Activated CD8-positive, alpha-beta T cell treated with anti-CD3 and anti-CD28 coated beads for 36 hours (primary cell): ENCODE measurements at regions of chr6 and their contacts with region 1.

Region 1: GRCh38 chr6:132798869-132799538 is 567 bp upstream of the SLC18B1 start:
- DNase-seq: peak; percentile 83
- ATAC-seq: peak; percentile 86
- H3K4me3 Mint-ChIP-seq: no peak overlapping the region
- H3K27ac Mint-ChIP-seq: no peak overlapping the region
- H3K4me1 Mint-ChIP-seq: peaks cover 19% of the 10 kb centered on the region
- H3K27me3 Mint-ChIP-seq: no peaks in the 10 kb centered on the region
- CTCF ChIP-seq: peak; percentile 73

Region 2: GRCh38 chr6:132598473-132598872 is 200.5 kb before region 1 on chr6:
- CTCF ChIA-PET with region 1: no interaction called
- POLR2A ChIA-PET with region 1: no interaction called
- intact Hi-C with region 1: no loop called
- DNase-seq: peak; percentile 3
- ATAC-seq: no peak
- H3K4me3 Mint-ChIP-seq: no peak overlapping the region
- H3K27ac Mint-ChIP-seq: no peak overlapping the region
- H3K4me1 Mint-ChIP-seq: no peaks in the 10 kb centered on the region
- H3K27me3 Mint-ChIP-seq: peaks cover 18% of the 10 kb centered on the region
- CTCF ChIP-seq: no peak

Region 3: GRCh38 chr6:132669690-132670291 is 129.2 kb before region 1 on chr6:
- CTCF ChIA-PET with region 1: interaction called, 24 read pairs
- POLR2A ChIA-PET with region 1: no interaction called
- intact Hi-C with region 1: no loop called
- DNase-seq: no peak
- ATAC-seq: peak; percentile 60
- H3K4me3 Mint-ChIP-seq: no peak overlapping the region
- H3K27ac Mint-ChIP-seq: no peak overlapping the region
- H3K4me1 Mint-ChIP-seq: peaks cover 2% of the 10 kb centered on the region
- H3K27me3 Mint-ChIP-seq: peaks cover 6% of the 10 kb centered on the region
- CTCF ChIP-seq: peak; percentile 72

Region 4: DNA sequence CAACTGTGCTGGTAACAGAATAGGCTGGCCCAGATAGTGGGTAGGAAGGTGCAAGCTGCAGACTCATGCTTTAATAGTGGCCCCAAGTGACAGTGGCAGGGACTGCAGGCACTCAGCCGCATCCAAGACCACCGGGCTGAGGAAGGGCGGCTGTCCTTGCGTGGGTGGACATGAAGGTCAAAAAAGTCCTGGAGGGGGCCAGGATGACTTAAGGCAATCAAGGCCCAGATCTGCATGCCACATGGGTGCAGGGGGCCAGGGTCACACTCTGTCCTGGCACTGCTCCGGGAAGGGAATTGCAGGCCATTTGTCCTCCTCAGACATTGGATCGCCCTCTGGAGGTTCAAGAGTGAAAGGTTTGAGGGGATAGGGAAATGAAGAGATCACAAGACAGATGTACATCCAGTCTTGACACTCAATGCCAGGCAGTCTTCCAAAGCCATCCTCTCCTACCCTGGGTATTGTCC is 30.9 kb before region 1 on chr6:
- CTCF ChIA-PET with region 1: interaction called, 18 read pairs
- POLR2A ChIA-PET with region 1: interaction called, 9 read pairs
- intact Hi-C with region 1: no loop called
- DNase-seq: peak; percentile 61
- ATAC-seq: peak; percentile 79
- H3K4me3 Mint-ChIP-seq: no peak overlapping the region
- H3K27ac Mint-ChIP-seq: no peak overlapping the region
- H3K4me1 Mint-ChIP-seq: peaks cover 19% of the 10 kb centered on the region
- H3K27me3 Mint-ChIP-seq: no peaks in the 10 kb centered on the region
- CTCF ChIP-seq: peak; percentile 72

Region 5: DNA sequence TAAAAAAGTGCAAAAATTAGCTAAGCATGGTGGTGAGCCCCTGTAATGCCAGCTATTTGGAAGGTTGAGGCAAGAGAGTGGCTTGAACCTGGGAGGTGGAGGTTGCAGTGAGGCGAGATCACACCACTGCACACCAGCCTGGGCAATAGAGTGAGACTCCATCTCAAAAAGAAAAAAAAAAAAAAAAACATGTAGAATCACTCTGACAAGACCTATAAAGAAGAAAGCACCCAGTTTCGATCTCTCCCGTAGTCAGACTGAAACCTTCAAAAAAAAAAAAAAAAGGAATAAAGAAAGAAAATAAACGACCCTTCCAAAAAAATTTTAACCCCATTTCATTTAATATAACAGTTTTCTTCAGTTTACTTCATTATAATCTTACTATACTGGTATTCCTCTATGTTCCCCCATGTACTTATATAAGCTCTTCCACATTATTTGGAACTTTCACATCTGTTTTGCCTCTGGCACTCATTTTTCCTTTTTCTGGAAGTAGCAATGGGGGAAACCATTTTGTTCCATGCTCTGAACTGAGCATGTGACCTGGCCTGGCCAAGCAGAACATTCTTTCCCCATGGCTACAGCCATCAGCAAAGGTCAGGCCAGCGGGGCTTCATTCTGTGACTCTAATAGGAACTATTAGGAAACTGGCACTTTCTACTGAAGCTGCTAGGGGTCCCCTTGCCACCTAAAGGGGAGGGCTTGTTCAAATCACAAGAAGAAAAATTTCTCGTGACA is 10.2 kb before region 1 on chr6:
- CTCF ChIA-PET with region 1: interaction called, 11 read pairs
- POLR2A ChIA-PET with region 1: interaction called, 3 read pairs
- intact Hi-C with region 1: no loop called
- DNase-seq: no peak
- ATAC-seq: no peak
- H3K4me3 Mint-ChIP-seq: no peak overlapping the region
- H3K27ac Mint-ChIP-seq: no peak overlapping the region
- H3K4me1 Mint-ChIP-seq: peaks cover 13% of the 10 kb centered on the region
- H3K27me3 Mint-ChIP-seq: no peaks in the 10 kb centered on the region
- CTCF ChIP-seq: no peak

Region 6: DNA sequence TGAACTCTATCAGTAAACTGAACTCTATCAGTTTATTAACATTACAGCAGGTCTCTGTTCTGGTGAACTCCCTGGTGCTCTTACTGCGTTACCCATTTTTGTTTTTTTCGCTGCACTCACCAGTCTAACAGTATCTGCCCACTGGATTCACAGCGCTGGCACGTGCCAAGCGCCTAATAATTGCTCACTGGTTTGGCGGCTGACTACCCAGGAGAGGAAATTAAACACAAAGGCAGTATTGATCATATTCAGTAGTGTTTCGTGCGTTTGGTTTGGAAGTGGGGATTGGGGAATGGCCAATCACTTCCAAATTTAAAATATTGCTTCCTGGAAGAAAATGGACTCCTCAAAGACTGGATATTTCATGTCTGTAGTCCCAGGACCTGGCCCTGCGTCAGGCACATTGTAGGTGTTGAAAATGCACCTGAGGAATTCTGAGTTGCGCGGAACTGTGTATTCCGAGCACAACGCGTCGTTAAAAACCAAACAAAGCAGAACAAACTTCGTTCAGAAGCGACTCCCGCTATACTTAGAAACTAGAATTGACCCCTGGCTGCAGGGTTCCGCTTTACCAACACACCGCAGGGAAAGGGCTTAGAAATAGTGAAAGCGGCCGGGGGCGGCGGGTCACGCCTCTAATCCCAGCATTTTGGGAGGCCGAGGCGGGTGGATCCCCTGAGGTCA is 14.3 kb after region 1 on chr6:
- CTCF ChIA-PET with region 1: interaction called, 53 read pairs
- POLR2A ChIA-PET with region 1: interaction called, 52 read pairs
- intact Hi-C with region 1: loop called (anchors 1 kb)
- DNase-seq: peak; percentile 70
- ATAC-seq: peak; percentile 7
- H3K4me3 Mint-ChIP-seq: peak overlapping the region; percentile 98
- H3K27ac Mint-ChIP-seq: peak overlapping the region; percentile 99
- H3K4me1 Mint-ChIP-seq: peaks cover 22% of the 10 kb centered on the region
- H3K27me3 Mint-ChIP-seq: no peaks in the 10 kb centered on the region
- CTCF ChIP-seq: no peak

Region 7: DNA sequence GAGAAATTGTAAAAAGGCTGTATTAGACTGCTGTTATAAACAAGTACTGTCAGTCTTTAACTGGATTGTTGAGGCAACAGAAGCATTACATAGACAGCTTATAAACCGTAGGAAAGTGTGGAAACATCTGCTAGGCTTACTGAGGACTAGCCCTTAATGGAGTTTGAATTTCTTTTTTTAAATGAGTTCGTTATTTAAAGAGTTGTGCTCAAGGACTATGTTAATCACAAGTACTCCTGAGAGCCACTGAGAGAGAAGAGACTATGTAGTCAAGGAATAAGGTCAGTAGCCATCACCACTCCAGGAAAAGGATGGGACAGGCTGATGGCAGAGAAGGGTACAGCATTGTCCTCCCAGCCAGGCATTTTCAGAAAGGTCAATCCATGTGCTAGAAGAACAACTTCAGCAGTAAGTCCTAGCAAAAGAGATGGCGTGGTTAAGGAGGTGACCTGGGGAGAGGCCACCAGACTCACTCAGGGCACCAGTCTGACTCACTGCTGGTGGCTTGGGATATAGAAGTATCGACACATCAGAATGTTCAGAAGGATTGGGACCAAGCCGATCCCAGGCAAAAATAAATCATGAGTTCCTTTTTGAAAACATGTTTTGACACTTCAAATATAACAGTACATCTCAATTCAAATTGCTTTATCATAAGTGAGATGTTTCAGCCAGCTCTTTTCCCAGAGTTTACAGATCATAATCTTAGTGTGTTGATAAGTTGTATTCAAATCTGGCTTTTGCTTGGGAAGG is 21.8 kb after region 1 on chr6:
- CTCF ChIA-PET with region 1: interaction called, 10 read pairs
- POLR2A ChIA-PET with region 1: interaction called, 52 read pairs
- intact Hi-C with region 1: no loop called
- DNase-seq: peak; percentile 21
- ATAC-seq: peak; percentile 5
- H3K4me3 Mint-ChIP-seq: no peak overlapping the region
- H3K27ac Mint-ChIP-seq: peak overlapping the region; percentile 53
- H3K4me1 Mint-ChIP-seq: peaks cover 42% of the 10 kb centered on the region
- H3K27me3 Mint-ChIP-seq: no peaks in the 10 kb centered on the region
- CTCF ChIP-seq: no peak